ENCODE measurements at regions of chr9 and their contacts with region 1.

Region 1: GRCh38 chr9:73023025-73023541 is 70.2 kb upstream of the ALDH1A1 start:
- DNase-seq: peak; percentile 9
- H3K4me3 ChIP-seq: no peak overlapping the region
- CTCF ChIP-seq: peak; percentile 75

Region 2: GRCh38 chr9:72827950-72828731 is 194.9 kb before region 1 on chr9:
- CTCF ChIA-PET with region 1: no interaction called
- POLR2A ChIA-PET with region 1: no interaction called
- DNase-seq: no peak
- H3K4me3 ChIP-seq: no peak overlapping the region
- CTCF ChIP-seq: no peak

Region 3: GRCh38 chr9:72871685-72872084 is 151.4 kb before region 1 on chr9:
- CTCF ChIA-PET with region 1: interaction called, 56 read pairs
- POLR2A ChIA-PET with region 1: no interaction called
- DNase-seq: no peak
- H3K4me3 ChIP-seq: no peak overlapping the region
- CTCF ChIP-seq: no peak

Region 4: GRCh38 chr9:73009649-73010288 is 13.3 kb before region 1 on chr9:
- CTCF ChIA-PET with region 1: interaction called, 17 read pairs
- POLR2A ChIA-PET with region 1: no interaction called
- DNase-seq: no peak
- H3K4me3 ChIP-seq: no peak overlapping the region
- CTCF ChIP-seq: no peak

Region 5: DNA sequence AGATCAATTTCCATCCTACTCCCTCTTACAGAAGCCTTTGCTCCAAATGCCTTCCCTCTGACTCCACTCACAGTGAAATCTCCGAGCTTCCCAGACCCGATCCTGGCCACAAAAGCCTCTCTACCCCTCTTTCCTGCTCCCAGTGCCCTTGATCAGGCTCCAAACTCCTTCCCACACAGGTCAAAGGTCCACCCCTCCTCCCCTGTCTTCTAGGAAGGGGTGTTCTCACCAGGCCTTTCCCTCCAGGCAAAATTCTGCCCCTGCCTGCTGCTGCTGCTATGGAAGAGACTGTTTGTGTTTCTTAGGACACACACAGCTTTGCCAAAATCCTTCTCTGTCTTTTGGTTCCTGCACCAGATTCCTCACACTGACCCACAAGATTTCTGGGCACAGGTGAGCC is 15.5 kb after region 1 on chr9:
- CTCF ChIA-PET with region 1: interaction called, 41 read pairs
- POLR2A ChIA-PET with region 1: no interaction called
- DNase-seq: no peak
- H3K4me3 ChIP-seq: no peak overlapping the region
- CTCF ChIP-seq: no peak

Measured in AG04449 (cell line).